ENCODE measurements at regions of chr14 and their contacts with region 1.

Region 1: GRCh38 chr14:68520637-68521556 is 272.0 kb downstream of the ZFP36L1 start:
- DNase-seq: peak in 5 of 6 donors; percentile 80 to 86 (median 83)
- ATAC-seq: peak; percentile 68 to 79 (median 70)
- H3K4me3 ChIP-seq: no peak overlapping the region
- H3K27ac ChIP-seq: peak overlapping the region; percentile 93 to 96 (median 96)
- H3K4me1 ChIP-seq: peaks cover 44 to 79% (median 69%) of the 10 kb centered on the region in 3 donors
- H3K27me3 ChIP-seq: no peaks in the 10 kb centered on the region
- CTCF ChIP-seq: no peak

Region 2: DNA sequence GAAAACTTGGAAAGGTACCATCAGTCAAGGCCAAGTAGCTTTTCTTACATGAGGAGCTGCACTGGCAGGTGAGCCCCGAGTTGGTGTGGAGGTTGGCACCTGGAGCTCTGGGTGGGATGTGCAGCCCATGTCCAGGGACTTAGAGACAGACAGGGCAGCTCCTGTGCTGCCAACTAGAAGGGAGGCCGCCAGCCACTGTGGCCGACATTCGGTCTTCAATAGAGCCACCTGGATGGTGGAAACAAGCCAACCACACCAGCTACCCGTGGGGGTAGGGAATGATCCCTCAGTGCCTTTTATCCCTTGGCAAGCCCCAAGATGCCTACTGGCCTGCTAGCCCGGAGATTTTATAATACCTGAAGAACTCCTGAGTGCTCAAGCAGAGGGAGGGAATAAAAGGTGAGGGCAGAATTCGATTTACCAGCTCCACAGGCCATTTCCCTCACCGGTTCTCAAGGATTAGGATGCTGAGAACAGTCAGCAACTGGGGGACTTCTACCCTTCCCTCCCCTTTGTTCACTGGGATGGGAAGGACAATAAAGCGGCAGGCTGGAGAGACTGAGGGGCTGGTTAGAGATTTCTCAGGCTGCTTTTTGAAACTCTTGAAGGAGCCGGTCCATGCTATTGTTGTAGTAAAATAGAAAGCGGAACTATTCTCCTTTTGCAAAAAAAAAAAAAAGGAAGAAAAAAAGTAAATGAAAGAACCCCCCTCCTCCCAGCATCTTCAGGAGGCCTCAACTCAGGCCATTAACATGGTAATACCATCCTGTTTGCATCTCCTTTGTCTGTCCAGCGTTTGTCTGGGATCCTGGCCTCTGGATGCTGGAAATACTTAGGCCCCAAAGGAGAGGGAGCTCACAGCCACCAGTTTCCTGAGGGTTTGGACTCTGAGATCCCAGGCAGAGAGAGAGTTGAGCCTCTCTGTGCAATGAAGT is 49.6 kb before region 1 on chr14:
- intact Hi-C with region 1: loop called in 1 of 3 experiments (anchors 5 kb)
- DNase-seq: peak; percentile 62 to 83 (median 68)
- ATAC-seq: peak; percentile 33 to 60 (median 41)
- H3K4me3 ChIP-seq: no peak overlapping the region
- H3K27ac ChIP-seq: peak overlapping the region; percentile 51 to 88 (median 75)
- H3K4me1 ChIP-seq: peaks cover 87 to 97% (median 88%) of the 10 kb centered on the region in 3 donors
- H3K27me3 ChIP-seq: no peaks in the 10 kb centered on the region
- CTCF ChIP-seq: no peak

Region 3: GRCh38 chr14:68749487-68750475 is 228.9 kb after region 1 on chr14:
- intact Hi-C with region 1: no loop called
- DNase-seq: no peak
- ATAC-seq: peak in 1 of 4 donors; percentile 41
- H3K4me3 ChIP-seq: no peak overlapping the region
- H3K27ac ChIP-seq: no peak overlapping the region
- H3K4me1 ChIP-seq: no peaks in the 10 kb centered on the region
- H3K27me3 ChIP-seq: no peaks in the 10 kb centered on the region
- CTCF ChIP-seq: no peak

Region 4: GRCh38 chr14:68788996-68789820 is 268.3 kb after region 1 on chr14:
- intact Hi-C with region 1: loop called in 1 of 3 experiments (anchors 10 kb)
- DNase-seq: peak; percentile 79 to 91 (median 85)
- ATAC-seq: peak in 3 of 4 donors; percentile 5 to 13 (median 8)
- H3K4me3 ChIP-seq: peak overlapping the region; percentile 73 to 85 (median 78)
- H3K27ac ChIP-seq: peak overlapping the region; percentile 99 to 100 (median 99)
- H3K4me1 ChIP-seq: peaks cover 22 to 31% (median 25%) of the 10 kb centered on the region in 3 donors
- H3K27me3 ChIP-seq: no peaks in the 10 kb centered on the region
- CTCF ChIP-seq: peak in 3 of 4 donors; percentile 19 to 44 (median 28)